Activated naive CD4-positive, alpha-beta T cell treated with anti-CD3 and anti-CD28 coated beads, Interleukin-2, amount 10 ng/mL, durations not matched to agents 7 days and 5 days (primary cell): ENCODE measurements at regions of chr2 and their contacts with region 1.

Region 1: DNA sequence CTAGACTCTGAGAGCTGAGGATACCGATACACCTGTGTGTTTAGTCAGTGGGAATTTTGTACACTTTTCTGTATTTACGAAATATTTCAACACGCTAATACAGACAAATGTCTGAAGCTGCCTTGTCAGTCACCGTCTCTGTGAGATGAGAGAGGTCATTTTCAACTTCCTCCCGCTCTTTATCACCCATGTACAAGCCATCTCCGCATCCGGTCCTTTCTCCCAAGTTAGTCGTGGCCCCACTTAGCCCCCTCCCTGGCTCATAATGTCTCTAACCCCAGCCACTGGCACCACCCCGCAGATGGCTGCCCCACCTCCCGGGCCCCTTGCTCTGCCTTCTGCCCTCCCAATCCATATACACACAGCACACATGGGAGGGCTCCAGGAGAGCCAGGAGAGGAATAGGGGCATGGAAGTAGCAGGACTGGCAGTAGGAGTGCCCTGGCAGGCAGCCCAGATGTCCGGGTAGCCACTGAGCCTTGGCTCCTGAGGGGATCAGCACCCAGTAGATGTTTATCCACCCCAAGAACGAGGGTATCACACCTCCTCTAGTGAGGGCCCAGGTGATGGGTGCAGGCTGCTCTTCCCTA is 2.0 kb upstream of the RUFY4 start:
- DNase-seq: no peak
- H3K4me3 Mint-ChIP-seq: no peak overlapping the region
- H3K27ac Mint-ChIP-seq: no peak overlapping the region
- H3K4me1 Mint-ChIP-seq: peaks cover 12% of the 10 kb centered on the region
- H3K27me3 Mint-ChIP-seq: peaks cover 37% of the 10 kb centered on the region

Region 2: DNA sequence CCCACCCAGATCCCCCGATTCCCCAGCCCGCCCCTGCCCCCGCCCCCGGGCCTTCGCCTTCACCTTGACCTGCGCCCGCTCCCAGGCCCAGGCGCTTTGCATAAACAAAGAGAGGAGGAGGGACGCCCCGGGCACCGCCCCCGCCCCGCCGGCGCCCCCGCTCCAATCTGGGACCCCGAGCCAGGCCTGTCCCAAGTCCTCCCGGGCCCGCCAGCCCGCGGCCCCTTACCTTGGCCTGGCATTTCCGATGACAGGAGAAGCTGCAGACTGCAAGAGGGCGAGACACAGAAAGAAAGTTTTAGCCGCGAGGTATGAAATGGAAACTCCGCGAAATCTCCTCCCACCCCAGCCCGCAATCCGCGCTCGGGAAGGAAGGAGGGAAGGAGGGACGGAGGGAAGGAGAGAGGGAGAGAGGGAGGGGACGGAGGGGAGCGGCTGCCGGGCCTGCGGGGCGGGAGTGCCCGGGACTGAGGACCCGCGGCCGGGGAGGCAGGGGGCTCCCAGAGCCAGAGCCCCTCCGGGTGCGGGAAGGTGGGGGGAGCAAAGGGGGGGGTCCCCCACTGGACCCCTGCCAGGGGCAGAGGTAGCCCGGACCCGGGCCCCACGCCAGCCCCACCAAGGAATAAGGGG is 88.4 kb before region 1 on chr2:
- CTCF ChIA-PET with region 1: no interaction called
- DNase-seq: no peak
- H3K4me3 Mint-ChIP-seq: no peak overlapping the region
- H3K27ac Mint-ChIP-seq: no peak overlapping the region
- H3K4me1 Mint-ChIP-seq: no peaks in the 10 kb centered on the region
- H3K27me3 Mint-ChIP-seq: peaks cover 20% of the 10 kb centered on the region

Region 3: DNA sequence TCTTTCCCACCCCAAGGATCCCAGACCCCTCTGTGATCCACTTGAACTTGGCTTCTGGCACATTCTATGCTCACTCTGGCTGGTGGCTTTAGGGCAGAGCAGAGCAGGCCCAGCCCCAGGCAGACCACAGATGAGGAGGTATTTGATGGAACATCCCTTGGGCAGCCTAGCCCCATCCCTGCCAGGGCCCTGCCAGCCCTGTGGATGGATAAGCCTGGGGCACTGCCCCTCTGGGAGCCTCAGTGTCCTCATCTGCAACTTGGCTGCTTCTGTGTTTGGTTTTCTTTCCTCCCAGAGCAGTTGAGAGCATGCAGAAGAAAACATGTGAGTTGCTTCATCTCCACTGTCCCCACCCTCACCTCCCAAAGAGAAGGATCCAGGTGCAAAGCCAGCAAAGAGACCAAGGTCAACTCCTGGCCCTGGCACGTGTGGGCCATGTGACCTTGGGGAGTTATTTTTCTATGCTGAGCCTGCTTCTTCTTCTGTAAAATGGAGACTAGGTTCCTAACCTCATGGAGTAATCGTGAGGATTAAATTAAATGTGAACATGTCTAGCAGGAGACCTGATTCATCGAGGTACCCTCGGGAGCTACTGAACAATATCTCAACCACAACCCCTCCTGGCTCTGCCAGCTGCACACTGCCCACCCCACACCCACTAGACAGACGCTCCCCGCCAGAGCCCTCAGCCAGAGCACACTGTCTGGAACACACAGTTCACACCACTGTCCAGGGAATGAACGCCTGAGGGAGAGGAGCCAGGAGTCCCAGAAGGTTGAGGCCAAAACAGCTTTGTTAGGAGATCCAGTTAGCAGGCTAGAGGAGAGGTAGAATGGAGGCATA is 49.6 kb before region 1 on chr2:
- CTCF ChIA-PET with region 1: no interaction called
- DNase-seq: no peak
- H3K4me3 Mint-ChIP-seq: no peak overlapping the region
- H3K27ac Mint-ChIP-seq: no peak overlapping the region
- H3K4me1 Mint-ChIP-seq: no peaks in the 10 kb centered on the region
- H3K27me3 Mint-ChIP-seq: peaks cover 24% of the 10 kb centered on the region

Region 4: GRCh38 chr2:218033590-218034496 is 33.2 kb before region 1 on chr2:
- CTCF ChIA-PET with region 1: interaction called, 25 read pairs
- DNase-seq: peak; percentile 20
- H3K4me3 Mint-ChIP-seq: peak overlapping the region; percentile 1
- H3K27ac Mint-ChIP-seq: no peak overlapping the region
- H3K4me1 Mint-ChIP-seq: peaks cover 13% of the 10 kb centered on the region
- H3K27me3 Mint-ChIP-seq: peaks cover 30% of the 10 kb centered on the region